Endothelial cell of umbilical vein (primary cell): ENCODE measurements at regions of chr10 and their contacts with region 1.

Region 1: DNA sequence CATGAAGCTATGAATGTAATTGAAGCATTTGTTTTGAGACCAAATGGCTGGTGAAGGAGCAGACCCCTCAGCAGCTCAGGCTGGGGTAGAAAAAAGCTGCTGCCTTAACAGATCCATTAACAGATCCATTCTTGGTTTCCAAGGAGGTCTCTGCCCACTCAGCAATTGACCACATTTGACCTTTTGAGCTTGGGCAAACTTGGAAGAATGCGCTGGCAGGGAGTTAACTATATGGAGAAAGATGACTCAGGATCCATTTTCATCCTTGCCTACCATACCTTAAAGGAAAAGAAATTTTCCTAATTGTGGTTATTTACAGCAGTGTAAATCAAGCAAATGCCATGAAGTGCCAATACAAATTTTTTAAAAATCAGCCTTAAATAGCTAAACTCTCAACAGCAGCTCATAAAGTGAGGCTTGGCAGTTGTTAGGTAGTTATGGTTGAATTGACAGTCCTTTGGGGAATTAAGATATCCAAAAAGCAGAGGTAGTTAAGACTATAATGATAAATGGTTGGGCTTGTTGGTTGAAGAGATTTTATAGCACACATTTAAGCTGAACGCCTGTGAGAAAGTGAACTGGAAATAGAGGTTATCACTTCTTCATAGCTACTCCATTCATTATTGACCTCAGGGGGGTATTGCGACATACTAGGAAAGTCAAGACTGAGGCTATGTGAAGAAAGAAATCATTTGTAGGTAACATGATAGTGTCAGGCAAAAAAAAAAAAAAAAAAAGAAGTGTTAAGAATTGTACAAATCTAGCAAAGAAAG is 83.9 kb downstream of the MKX start:
- DNase-seq: no peak
- H3K4me3 ChIP-seq: no peak overlapping the region
- H3K27ac ChIP-seq: no peak overlapping the region
- H3K4me1 ChIP-seq: no peaks in the 10 kb centered on the region
- H3K27me3 ChIP-seq: peaks cover 0 to 8% of the 10 kb centered on the region in 2 experiments
- CTCF ChIP-seq: no peak
- POLR2A ChIP-seq: no peak

Region 2: GRCh38 chr10:27369880-27370279 is 291.8 kb before region 1 on chr10:
- CTCF ChIA-PET with region 1: interaction called, 15 read pairs
- POLR2A ChIA-PET with region 1: no interaction called
- dilution Hi-C with region 1: no loop called
- intact Hi-C with region 1: loop called (anchors 1 kb)
- DNase-seq: peak; percentile 16
- H3K4me3 ChIP-seq: no peak overlapping the region
- H3K27ac ChIP-seq: no peak overlapping the region
- H3K4me1 ChIP-seq: no peaks in the 10 kb centered on the region
- H3K27me3 ChIP-seq: peaks cover 0 to 3% of the 10 kb centered on the region in 2 experiments
- CTCF ChIP-seq: no peak
- POLR2A ChIP-seq: no peak

Region 3: DNA sequence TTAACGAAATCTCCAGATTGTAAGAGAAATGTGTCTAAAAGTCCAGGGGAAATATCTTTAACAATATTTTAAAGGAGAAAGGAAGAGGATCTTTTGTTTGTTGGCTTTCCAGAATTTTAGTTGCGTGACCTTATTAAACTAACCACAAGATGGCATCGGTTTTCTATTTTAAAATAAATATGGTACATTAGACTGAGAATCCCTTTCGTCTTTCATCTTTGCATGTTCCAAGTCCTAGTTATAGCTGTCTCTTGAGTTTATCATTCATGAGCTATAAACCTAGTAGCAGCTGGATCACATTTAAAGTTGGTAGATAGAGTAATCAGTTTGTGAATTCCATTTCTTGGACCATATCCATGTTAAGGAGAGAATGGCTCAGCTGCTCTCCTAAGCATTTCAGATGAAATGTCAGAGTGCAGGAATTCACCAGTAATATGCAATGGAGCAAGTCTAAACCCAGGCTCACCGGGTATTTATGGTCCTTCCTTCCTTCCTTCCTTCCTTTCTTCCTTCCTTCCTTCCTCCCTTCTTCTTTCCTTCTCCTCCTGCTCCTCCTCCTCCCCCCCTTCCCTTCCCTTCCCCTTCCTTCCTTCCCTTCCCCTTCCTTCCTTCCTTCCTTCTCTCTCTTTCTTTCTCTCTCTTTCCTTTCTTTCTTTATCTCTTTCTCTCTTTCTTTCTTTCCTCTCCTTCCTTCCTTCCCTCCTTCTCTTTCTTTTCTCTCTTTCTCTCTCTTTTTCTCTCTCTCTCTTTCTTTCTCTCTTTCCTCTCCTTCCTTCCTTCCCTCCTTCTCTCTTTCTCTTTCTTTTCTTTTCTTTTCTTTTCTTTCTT is 215.4 kb before region 1 on chr10:
- CTCF ChIA-PET with region 1: interaction called, 10 read pairs
- POLR2A ChIA-PET with region 1: no interaction called
- dilution Hi-C with region 1: no loop called
- intact Hi-C with region 1: loop called (anchors 1 kb)
- DNase-seq: peak; percentile 51
- H3K4me3 ChIP-seq: no peak overlapping the region
- H3K27ac ChIP-seq: no peak overlapping the region
- H3K4me1 ChIP-seq: no peaks in the 10 kb centered on the region
- H3K27me3 ChIP-seq: no peaks in the 10 kb centered on the region
- CTCF ChIP-seq: peak; percentile 11 to 13
- POLR2A ChIP-seq: no peak

Region 4: DNA sequence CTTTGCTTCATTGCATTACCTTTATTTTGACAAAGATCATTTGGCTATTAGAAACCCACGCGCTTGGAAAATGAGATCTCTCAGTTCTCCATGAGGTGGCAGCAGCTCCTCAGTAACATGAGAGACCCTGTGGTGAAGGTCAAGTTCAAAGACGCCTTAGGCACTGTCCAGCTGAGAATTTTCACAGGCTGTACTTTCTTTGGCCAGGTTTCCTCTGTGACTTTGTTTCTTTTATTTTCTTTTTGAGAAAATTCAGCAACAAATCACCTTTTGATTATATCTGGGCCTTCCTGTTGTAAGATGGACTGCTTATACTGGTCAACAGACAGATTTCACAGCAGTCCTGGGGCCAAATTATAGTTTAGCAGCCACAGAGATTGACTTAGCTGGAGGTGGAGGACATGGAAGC is 103.1 kb before region 1 on chr10:
- CTCF ChIA-PET with region 1: interaction called, 4 read pairs
- POLR2A ChIA-PET with region 1: no interaction called
- dilution Hi-C with region 1: no loop called
- intact Hi-C with region 1: loop called (anchors 1 kb)
- DNase-seq: peak; percentile 48
- H3K4me3 ChIP-seq: no peak overlapping the region
- H3K27ac ChIP-seq: no peak overlapping the region
- H3K4me1 ChIP-seq: no peaks in the 10 kb centered on the region
- H3K27me3 ChIP-seq: no peaks in the 10 kb centered on the region
- CTCF ChIP-seq: peak; percentile 50 to 53
- POLR2A ChIP-seq: no peak